Activated CD4-positive, alpha-beta T cell treated with anti-CD3 and anti-CD28 coated beads for 36 hours (primary cell): ENCODE measurements at regions of chr11 and their contacts with region 1.

Region 1: GRCh38 chr11:6705905-6706535 is 22.9 kb upstream of the MRPL17 start:
- DNase-seq: peak; percentile 59
- ATAC-seq: peak; percentile 75
- H3K4me3 Mint-ChIP-seq: no peak overlapping the region
- H3K27ac Mint-ChIP-seq: peak overlapping the region; percentile 23
- H3K4me1 Mint-ChIP-seq: peaks cover 18% of the 10 kb centered on the region
- H3K27me3 Mint-ChIP-seq: no peaks in the 10 kb centered on the region

Region 2: GRCh38 chr11:6531267-6531752 is 174.7 kb before region 1 on chr11:
- CTCF ChIA-PET with region 1: interaction called, 37 read pairs
- POLR2A ChIA-PET with region 1: no interaction called
- intact Hi-C with region 1: loop called (anchors 1 kb)
- DNase-seq: peak; percentile 26
- ATAC-seq: peak; percentile 71
- H3K4me3 Mint-ChIP-seq: no peak overlapping the region
- H3K27ac Mint-ChIP-seq: no peak overlapping the region
- H3K4me1 Mint-ChIP-seq: peaks cover 11% of the 10 kb centered on the region
- H3K27me3 Mint-ChIP-seq: no peaks in the 10 kb centered on the region

Region 3: GRCh38 chr11:6693342-6694228 is 12.4 kb before region 1 on chr11:
- CTCF ChIA-PET with region 1: interaction called, 12 read pairs
- POLR2A ChIA-PET with region 1: no interaction called
- intact Hi-C with region 1: no loop called
- DNase-seq: peak; percentile 75
- ATAC-seq: peak; percentile 92
- H3K4me3 Mint-ChIP-seq: no peak overlapping the region
- H3K27ac Mint-ChIP-seq: peak overlapping the region; percentile 20
- H3K4me1 Mint-ChIP-seq: peaks cover 32% of the 10 kb centered on the region
- H3K27me3 Mint-ChIP-seq: no peaks in the 10 kb centered on the region

Region 4: GRCh38 chr11:6719576-6719975 is 13.6 kb after region 1 on chr11:
- CTCF ChIA-PET with region 1: interaction called, 16 read pairs
- POLR2A ChIA-PET with region 1: no interaction called
- intact Hi-C with region 1: no loop called
- DNase-seq: no peak
- ATAC-seq: no peak
- H3K4me3 Mint-ChIP-seq: no peak overlapping the region
- H3K27ac Mint-ChIP-seq: no peak overlapping the region
- H3K4me1 Mint-ChIP-seq: peaks cover 46% of the 10 kb centered on the region
- H3K27me3 Mint-ChIP-seq: no peaks in the 10 kb centered on the region

Region 5: DNA sequence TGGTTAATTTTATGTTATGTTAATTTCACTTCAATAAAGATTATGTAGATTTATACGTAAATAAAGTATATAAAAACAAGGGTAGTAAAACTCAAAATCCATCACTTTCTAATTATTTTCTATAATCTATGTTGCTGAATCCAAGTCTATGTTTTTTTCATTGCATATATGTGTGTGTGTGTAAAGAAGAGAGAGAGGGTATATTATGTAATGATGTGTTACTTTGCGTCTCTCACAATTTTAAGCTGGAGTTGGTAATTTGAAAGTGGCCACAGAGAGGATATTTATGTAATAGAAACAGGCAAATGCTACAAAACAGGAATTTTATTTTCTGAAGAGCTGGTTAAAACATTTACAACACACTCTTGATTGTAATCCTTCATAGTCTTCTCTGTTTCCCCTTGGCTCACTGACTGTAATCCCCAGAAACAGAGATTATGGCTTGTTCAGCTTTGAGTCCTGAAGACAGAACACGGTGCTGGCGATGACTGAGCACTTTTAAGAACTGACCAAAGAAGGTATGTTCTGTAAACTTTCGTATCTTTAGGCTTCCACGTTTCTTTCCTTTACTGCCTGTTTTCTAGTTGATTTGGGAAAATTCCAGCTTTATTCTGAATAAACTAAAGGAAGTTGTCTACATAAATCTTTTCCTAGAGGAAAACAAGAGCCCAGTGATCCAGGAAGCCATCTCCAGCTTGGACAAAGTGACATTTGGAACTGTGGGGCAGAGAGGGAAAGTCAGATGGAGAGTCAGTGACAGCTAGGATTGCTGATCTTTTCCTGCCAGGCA is 22.1 kb after region 1 on chr11:
- CTCF ChIA-PET with region 1: interaction called, 18 read pairs
- POLR2A ChIA-PET with region 1: no interaction called
- intact Hi-C with region 1: no loop called
- DNase-seq: no peak
- ATAC-seq: no peak
- H3K4me3 Mint-ChIP-seq: no peak overlapping the region
- H3K27ac Mint-ChIP-seq: peak overlapping the region; percentile 75
- H3K4me1 Mint-ChIP-seq: peaks cover 67% of the 10 kb centered on the region
- H3K27me3 Mint-ChIP-seq: no peaks in the 10 kb centered on the region

Region 6: GRCh38 chr11:6746086-6746618 is 40.1 kb after region 1 on chr11:
- CTCF ChIA-PET with region 1: interaction called, 11 read pairs
- POLR2A ChIA-PET with region 1: no interaction called
- intact Hi-C with region 1: no loop called
- DNase-seq: peak; percentile 58
- ATAC-seq: peak; percentile 85
- H3K4me3 Mint-ChIP-seq: no peak overlapping the region
- H3K27ac Mint-ChIP-seq: no peak overlapping the region
- H3K4me1 Mint-ChIP-seq: peaks cover 30% of the 10 kb centered on the region
- H3K27me3 Mint-ChIP-seq: no peaks in the 10 kb centered on the region

Region 7: DNA sequence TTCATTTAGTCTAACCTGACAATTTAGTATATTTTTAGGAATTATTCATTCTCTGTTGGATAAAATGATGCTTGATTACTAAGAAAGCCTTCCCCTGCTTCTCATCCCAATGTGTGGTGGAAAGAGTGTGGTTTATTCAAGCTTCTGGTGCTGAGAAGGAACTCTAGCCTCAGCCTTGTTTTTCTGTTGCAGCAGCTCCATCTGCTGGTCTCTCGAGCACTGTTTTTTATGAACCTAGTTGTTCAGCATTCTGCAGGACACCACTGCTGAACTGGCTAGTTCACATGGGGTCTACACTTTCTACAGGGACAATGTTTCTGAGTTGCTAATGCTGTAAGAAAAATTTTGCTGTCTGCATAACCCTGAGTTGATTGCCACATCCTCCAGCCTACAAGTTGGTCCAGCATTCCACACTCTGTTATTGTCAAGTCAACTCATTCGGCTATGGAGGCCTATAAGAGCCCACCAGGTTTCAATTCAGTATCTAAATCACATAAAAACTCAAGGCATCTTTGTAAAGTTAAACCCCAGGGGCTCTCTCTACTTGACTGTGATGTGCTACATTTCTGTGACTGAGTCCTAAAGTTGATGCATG is 51.5 kb after region 1 on chr11:
- CTCF ChIA-PET with region 1: interaction called, 15 read pairs
- POLR2A ChIA-PET with region 1: no interaction called
- intact Hi-C with region 1: loop called (anchors 1 kb)
- DNase-seq: peak; percentile 76
- ATAC-seq: peak; percentile 85
- H3K4me3 Mint-ChIP-seq: no peak overlapping the region
- H3K27ac Mint-ChIP-seq: no peak overlapping the region
- H3K4me1 Mint-ChIP-seq: peaks cover 10% of the 10 kb centered on the region
- H3K27me3 Mint-ChIP-seq: no peaks in the 10 kb centered on the region